ENCODE measurements at regions of chr20 and their contacts with region 1.

Region 1: DNA sequence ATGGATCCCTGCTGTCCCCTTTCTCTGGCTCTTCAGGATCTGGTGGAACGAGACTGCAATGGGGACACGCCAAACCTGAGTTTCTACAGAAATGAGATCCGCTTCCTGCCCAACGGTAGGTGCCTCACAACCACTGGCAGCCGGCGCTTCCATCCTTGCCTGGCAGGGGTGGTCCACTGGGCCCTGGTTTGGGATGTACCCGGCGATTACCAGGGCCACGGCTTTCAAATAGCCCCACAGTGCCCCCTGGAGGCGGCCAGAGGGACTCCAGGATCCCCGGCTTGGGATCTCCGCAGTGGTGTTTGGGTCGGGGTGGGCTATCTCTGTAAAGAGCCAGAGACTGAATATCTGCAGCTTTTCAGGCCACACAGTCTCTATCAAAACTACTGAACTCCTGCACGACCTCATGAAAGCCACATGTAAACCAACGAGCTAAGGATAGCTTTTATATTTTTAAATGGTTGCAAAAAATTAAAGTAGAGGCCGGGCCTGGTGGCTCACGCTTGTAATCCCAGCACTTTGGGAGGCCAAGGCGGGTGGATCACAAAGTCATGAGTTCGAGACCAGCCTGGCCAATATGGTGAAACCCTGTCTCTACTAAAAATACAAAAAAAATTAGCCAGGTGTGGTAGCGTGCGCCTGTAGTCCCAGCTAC is 3.7 kb downstream of the OGFR start:
- DNase-seq: peak; percentile 64 to 85 (median 72)
- ATAC-seq: peak; percentile 58
- H3K4me3 ChIP-seq: no peak overlapping the region
- H3K4me3 Mint-ChIP-seq: peak overlapping the region; percentile 89
- H3K27ac ChIP-seq: no peak overlapping the region
- H3K27ac Mint-ChIP-seq: peak overlapping the region; percentile 84
- H3K4me1 ChIP-seq: peaks cover 41% of the 10 kb centered on the region
- H3K4me1 Mint-ChIP-seq: peaks cover 28% of the 10 kb centered on the region
- H3K27me3 ChIP-seq: no peaks in the 10 kb centered on the region
- H3K27me3 Mint-ChIP-seq: peaks cover 4% of the 10 kb centered on the region
- CTCF ChIP-seq: peak; percentile 91

Region 2: DNA sequence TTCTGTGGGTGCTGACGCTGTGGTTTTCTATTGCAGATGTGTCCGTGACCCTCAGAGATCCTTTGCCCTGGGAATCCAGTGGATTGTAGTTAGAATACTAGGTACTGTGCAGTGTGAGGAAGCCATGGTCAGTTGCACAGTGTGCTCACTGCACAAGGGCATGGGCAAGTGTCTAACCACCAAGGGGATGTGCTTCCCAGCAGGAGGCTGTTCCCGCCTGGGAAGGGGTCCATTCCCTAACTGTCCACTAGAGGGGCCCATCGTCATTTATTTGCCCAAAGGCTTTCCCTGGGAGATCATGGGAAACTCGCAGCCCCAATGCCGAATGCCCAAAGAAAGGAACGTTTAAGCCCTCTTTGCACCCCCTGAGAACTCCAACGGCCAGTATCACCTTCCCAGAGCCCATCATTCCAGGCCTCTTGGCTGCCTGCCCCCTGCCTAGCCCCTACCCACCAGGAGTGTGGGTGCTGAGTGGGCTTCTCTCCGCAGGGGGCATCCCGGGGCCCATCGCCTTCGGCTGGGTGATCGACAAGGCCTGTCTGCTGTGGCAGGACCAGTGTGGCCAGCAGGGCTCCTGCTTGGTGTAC is 139.8 kb before region 1 on chr20:
- CTCF ChIA-PET with region 1: interaction called, 3 read pairs
- POLR2A ChIA-PET with region 1: no interaction called
- intact Hi-C with region 1: loop called (anchors 1 kb)
- DNase-seq: peak in 11 of 14 experiments; percentile 24 to 72 (median 42)
- ATAC-seq: peak; percentile 52
- H3K4me3 ChIP-seq: no peak overlapping the region
- H3K4me3 Mint-ChIP-seq: no peak overlapping the region
- H3K27ac ChIP-seq: no peak overlapping the region
- H3K27ac Mint-ChIP-seq: no peak overlapping the region
- H3K4me1 ChIP-seq: no peaks in the 10 kb centered on the region
- H3K4me1 Mint-ChIP-seq: no peaks in the 10 kb centered on the region
- H3K27me3 ChIP-seq: no peaks in the 10 kb centered on the region
- H3K27me3 Mint-ChIP-seq: no peaks in the 10 kb centered on the region
- CTCF ChIP-seq: peak; percentile 83

Region 3: DNA sequence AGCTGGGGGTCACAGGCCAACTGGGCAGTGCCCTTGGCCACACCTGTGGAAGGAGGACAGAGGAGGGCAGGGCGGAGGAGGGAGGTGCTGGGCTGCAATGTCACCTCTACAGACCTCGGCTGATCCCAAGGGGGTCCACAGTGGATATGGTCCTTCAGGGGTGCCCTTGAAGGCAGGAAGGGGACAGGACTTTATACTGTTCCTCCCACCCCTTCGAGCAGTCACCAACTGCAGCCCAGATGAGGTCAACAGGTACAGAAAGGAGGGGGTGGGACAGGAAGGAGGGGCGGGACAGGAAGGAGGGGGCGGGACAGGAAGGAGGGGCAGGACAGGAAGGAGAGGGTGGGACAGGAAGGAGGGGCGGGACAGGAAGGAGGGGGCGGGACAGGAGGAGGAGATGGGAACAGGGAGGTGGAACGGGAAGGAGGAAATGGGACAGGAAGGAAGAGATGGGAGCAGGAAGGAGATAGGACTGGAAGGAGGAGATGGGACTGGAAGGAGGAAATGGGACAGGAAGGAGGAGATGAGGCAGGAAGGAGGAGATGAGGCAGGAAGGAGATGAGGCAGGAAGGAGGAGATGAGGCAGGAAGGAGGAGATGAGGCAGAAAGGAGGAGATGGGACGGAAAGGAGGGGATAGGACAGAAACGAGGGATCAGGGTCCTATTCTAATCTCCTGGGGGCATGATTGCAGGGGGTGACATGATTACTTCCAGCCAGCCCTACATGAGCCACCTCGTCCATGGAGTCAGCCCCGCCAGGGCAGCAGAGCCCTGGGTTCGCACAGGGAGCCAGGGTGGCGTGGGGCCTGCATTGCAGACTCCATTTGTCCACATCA is 31.4 kb before region 1 on chr20:
- CTCF ChIA-PET with region 1: no interaction called
- POLR2A ChIA-PET with region 1: no interaction called
- intact Hi-C with region 1: no loop called
- DNase-seq: peak; percentile 29 to 89 (median 66)
- ATAC-seq: peak; percentile 82
- H3K4me3 ChIP-seq: peak overlapping the region; percentile 23
- H3K4me3 Mint-ChIP-seq: peak overlapping the region; percentile 74
- H3K27ac ChIP-seq: peak overlapping the region; percentile 77 to 89
- H3K27ac Mint-ChIP-seq: peak overlapping the region; percentile 92
- H3K4me1 ChIP-seq: peaks cover 59% of the 10 kb centered on the region
- H3K4me1 Mint-ChIP-seq: peaks cover 58% of the 10 kb centered on the region
- H3K27me3 ChIP-seq: no peaks in the 10 kb centered on the region
- H3K27me3 Mint-ChIP-seq: no peaks in the 10 kb centered on the region
- CTCF ChIP-seq: no peak

Region 4: DNA sequence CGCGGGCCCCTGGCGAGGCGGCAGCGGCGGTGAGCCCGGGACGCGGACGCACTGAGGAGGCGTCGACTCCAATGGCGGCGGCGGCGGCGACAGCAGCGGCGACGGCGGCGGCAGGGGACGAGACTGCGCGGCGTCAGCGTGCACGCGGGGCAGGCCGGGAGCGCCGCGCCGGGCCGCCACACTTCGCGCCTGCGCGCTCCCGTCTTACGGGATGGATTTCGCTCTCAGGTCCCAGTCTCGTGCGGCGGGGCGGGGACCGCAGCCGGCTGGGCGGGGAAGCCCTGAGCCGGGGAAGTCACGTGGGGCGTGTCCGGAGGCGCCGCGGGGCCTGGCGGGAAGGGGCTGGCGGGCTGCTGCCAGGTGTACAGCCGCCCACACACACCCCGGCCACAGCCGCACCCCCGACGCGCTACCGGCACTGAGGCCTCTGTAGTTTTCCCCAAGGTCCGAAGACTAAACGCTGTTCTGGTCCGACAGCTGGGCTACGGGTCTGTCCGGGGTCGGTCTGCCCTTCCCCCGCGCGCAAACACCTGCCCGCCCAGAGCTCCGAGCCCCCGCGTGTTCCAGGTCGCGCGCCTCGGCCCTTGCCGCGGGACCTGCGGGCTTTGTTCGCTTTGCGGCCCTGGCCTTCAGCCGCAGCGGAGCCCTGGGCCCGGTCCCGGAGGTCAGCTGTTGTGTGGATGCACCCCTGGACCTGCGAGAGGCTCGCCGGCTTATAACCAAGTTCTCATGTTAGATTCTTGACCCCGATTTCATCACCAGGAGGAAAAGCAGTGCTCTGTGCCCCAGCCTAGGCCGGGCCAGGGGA is 407.9 kb after region 1 on chr20 and contains the start of gene YTHDF1:
- CTCF ChIA-PET with region 1: no interaction called
- POLR2A ChIA-PET with region 1: no interaction called
- intact Hi-C with region 1: no loop called
- DNase-seq: peak; percentile 86 to 98 (median 94)
- ATAC-seq: peak; percentile 95
- H3K4me3 ChIP-seq: peak within 1 kb of the TSS; percentile 75
- H3K4me3 Mint-ChIP-seq: peak within 1 kb of the TSS; percentile 93
- H3K27ac ChIP-seq: peak within 1 kb of the TSS; percentile 44 to 70
- H3K27ac Mint-ChIP-seq: peak within 1 kb of the TSS; percentile 92
- H3K4me1 ChIP-seq: peaks cover 47% of the 10 kb centered on the region
- H3K4me1 Mint-ChIP-seq: peaks cover 48% of the 10 kb centered on the region
- H3K27me3 ChIP-seq: no peaks in the 10 kb centered on the region
- H3K27me3 Mint-ChIP-seq: no peaks in the 10 kb centered on the region
- CTCF ChIP-seq: no peak
- total RNA-seq, gene YTHDF1: 43.7 to 44.1 TPM

Measured in CD4-positive, alpha-beta T cell (primary cell).